Mammary epithelial cell (primary cell): ENCODE measurements at regions of chr18 and their contacts with region 1.

Region 1: DNA sequence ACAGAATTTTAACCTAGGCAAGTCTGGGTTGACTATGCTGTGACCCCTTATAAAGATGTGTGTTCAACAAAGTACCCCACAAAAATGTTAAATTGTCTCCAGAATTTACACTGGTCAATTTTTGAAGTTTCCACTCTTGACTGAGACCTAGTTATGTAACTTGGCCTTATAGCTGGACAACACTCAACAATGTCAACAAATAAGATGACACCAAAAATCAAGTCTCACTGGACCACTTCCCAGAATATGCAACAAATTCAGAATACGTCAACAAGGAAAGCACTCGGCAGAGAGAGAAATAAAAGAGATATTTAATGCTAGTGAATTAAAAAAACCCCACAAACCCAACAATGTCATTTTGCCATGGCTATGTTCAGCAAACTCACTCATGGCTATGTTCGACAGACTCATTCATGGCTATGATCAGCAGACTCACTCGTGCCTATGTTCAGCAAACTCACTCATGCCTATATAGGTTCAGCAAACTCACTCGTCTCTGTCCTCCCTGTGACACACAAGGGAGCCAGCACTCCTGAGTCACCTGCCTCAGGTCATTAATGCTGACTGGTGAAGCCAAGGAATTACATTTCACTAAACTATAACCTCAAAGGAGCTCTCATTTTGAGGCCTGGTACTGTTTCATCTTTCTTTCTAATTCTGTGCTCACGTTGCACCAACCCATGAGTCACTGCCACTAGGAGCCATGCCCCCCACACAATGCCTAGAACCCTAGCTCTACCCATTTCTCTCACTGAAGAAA is 72.7 kb downstream of the PTPN2 start:
- DNase-seq: peak; percentile 63
- H3K4me3 ChIP-seq: no peak overlapping the region
- H3K27ac ChIP-seq: peak overlapping the region; percentile 5
- H3K4me1 ChIP-seq: peaks cover 13% of the 10 kb centered on the region
- H3K27me3 ChIP-seq: no peaks in the 10 kb centered on the region
- CTCF ChIP-seq: no peak

Region 2: GRCh38 chr18:12774982-12775381 is 36.4 kb before region 1 on chr18:
- CTCF ChIA-PET with region 1: no interaction called
- dilution Hi-C with region 1: loop called (anchors 5 kb)
- in situ Hi-C with region 1: no loop called
- intact Hi-C with region 1: no loop called
- DNase-seq: no peak
- H3K4me3 ChIP-seq: no peak overlapping the region
- H3K27ac ChIP-seq: no peak overlapping the region
- H3K4me1 ChIP-seq: no peaks in the 10 kb centered on the region
- H3K27me3 ChIP-seq: no peaks in the 10 kb centered on the region
- CTCF ChIP-seq: no peak

Region 3: GRCh38 chr18:12882453-12883371 is 71.3 kb after region 1 on chr18:
- CTCF ChIA-PET with region 1: no interaction called
- dilution Hi-C with region 1: no loop called
- in situ Hi-C with region 1: no loop called
- intact Hi-C with region 1: no loop called
- DNase-seq: peak; percentile 8
- H3K4me3 ChIP-seq: peak overlapping the region; percentile 66 to 93 (median 89)
- H3K27ac ChIP-seq: peak overlapping the region; percentile 97
- H3K4me1 ChIP-seq: peaks cover 13% of the 10 kb centered on the region
- H3K27me3 ChIP-seq: no peaks in the 10 kb centered on the region
- CTCF ChIP-seq: no peak